ENCODE measurements at regions of chr17 and their contacts with region 1.

Region 1: DNA sequence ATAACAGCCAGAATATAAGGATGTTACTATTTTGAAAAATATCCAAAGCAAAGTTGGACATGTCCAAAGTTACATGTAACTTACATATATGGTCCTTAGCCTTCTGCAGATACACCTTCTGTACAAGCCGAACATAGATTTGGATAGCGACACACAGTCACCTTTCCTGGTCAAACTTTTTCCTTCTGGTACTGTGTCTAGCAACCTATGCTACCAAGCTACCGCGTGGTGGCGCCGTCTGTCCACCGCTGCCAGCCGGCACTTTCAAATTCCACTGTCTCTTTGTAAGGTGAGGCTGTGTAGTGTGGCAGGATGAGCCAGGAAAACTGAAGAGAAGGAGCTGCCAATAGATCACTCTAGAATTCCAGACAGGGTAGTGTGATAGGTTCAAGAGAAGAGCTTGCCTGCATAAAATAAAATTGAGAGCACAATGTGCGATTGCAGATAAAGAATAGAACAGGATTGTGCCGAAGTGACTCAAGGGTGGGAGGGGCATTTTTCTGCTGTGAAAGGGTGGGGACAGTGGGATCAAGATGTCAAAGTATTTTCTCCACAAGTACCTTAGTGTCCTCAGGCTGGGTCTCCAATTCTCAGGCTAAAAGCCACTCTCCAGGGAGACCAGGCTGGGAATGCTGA is 366.9 kb downstream of the SLC39A11 start:
- DNase-seq: no peak
- H3K4me3 ChIP-seq: no peak overlapping the region
- H3K27ac ChIP-seq: no peak overlapping the region
- H3K27me3 ChIP-seq: no peaks in the 10 kb centered on the region
- CTCF ChIP-seq: peak; percentile 98

Region 2: GRCh38 chr17:71371809-71372208 is 1353.7 kb before region 1 on chr17:
- CTCF ChIA-PET with region 1: no interaction called
- POLR2A ChIA-PET with region 1: no interaction called
- DNase-seq: no peak
- H3K4me3 ChIP-seq: no peak overlapping the region
- H3K27ac ChIP-seq: no peak overlapping the region
- H3K27me3 ChIP-seq: no peaks in the 10 kb centered on the region
- CTCF ChIP-seq: no peak

Region 3: DNA sequence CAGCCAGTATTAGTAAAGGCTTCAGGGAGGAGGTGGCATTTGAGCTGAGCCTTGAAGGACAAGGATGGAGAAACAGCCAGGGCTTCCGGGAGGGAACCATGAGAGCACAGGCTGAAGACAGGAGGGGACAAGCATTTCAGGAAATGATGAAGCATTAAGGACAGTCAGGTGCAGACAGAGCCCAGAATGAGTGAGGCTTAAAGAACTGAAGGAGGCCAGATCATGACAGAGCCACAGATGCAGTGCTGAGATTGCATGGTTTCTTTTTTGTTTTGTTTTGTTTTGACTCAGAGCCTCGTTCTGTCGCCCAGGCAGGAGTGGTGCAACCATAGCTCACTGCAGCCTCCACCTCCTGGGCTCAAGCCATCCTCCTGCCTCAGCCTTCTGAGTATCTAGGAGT is 393.2 kb before region 1 on chr17:
- CTCF ChIA-PET with region 1: no interaction called
- POLR2A ChIA-PET with region 1: no interaction called
- DNase-seq: no peak
- H3K4me3 ChIP-seq: no peak overlapping the region
- H3K27ac ChIP-seq: no peak overlapping the region
- H3K27me3 ChIP-seq: no peaks in the 10 kb centered on the region
- CTCF ChIP-seq: no peak

Region 4: DNA sequence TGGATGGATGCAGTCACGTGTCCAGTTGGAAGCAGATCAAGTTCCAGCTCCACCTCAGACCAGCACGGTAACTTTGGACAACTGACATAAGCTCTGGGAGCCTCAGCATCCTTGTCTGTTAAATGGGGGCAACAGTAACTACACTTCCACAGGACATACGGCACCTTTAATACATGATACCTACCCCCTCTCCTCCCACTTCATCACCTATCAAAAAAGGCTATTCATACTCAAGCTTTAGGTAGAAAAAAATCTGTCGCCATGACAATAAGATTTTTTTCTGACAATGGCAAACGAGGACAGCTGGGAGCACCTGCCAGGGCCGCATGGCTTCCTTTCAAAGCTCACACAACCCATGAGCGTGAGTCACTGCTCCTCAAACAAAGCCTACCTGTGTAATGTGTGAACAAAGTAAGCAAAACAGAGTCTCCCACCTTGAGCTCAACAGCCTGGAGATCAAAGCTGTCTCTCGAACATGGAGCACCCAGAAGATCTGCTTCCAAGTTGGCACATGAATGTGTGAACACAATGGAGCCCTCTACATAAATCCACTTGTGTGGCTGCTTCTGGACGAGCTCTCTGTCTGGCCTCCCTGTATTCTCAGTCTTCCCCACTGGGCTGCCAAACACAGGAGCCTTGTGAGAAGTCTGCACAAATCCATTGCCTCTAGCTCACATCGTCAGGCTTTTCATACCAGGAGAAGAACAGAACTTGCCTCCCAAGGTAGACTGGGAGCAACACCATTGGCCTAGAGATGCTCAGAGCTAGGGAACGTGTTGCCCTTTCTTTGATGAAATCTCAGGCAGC is 145.0 kb before region 1 on chr17:
- CTCF ChIA-PET with region 1: interaction called, 22 read pairs
- POLR2A ChIA-PET with region 1: no interaction called
- DNase-seq: no peak
- H3K4me3 ChIP-seq: no peak overlapping the region
- H3K27ac ChIP-seq: no peak overlapping the region
- H3K27me3 ChIP-seq: no peaks in the 10 kb centered on the region
- CTCF ChIP-seq: no peak

Region 5: DNA sequence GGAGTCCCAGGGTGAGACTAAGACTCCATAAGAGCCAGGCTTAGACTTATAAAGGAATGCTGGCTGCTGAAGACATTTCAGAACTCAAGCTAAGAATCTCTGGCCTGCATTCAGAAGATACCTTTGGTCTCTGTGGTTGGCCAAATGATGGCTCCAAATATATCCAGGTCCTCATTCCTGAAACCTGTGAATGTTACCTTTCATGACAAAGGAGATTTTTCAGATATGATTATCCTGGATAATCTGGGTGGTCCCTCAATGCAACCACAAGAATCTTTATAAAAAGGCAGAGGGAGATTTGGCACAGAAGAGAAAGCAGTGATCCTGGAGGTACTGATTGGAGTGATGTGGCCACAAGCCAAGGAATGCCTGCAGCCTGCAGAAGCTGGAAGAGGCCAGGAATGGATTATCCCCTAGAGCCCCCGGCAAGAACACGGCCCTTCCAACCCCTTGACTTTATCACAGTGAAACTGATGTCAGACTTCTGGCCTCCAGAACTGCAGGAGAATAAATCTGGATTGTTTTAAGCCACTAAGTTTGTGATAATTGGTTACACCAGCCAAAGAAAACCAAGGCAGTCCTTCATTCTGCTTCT is 113.7 kb after region 1 on chr17:
- CTCF ChIA-PET with region 1: no interaction called
- POLR2A ChIA-PET with region 1: no interaction called
- DNase-seq: no peak
- H3K4me3 ChIP-seq: no peak overlapping the region
- H3K27ac ChIP-seq: no peak overlapping the region
- H3K27me3 ChIP-seq: no peaks in the 10 kb centered on the region
- CTCF ChIP-seq: no peak

Region 6: DNA sequence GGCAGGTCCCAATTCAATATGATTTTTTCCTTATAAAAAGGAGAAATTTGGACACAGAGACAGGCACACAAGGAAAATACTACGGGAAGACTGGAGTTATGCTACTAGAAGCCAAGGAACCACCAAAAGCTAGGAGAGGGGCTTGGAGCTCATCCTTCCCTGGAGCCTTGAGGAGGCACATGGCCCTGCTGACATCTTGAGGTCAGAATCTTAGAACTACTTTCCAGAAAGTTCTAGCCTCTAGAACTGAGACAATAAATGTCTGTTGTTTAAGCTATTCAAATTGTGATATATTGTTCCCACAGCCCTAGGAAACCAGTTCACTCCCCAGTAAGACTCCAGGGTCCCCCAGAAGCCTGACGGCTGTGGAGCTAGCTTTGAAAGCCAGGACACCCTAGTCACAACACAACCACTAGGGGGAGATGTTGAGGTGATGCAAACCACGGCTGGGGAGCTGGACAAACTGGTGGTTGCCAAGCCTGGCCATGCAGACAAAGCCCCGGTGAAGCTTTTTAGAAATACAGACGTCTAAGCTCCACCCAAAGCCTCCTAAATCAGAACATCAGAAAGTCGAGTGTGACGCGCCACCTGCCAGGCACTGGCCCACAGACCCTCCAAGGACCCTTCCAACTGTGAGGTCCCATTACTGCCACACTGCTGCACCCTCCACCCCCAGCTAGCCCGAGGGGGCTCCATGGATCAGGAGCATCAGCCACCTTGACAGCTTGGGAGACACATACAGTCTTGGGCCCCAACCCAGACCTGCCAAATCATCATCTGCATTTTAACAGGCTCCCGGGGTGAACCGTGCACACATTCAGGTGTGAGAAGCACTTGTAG is 260.6 kb after region 1 on chr17:
- CTCF ChIA-PET with region 1: interaction called, 52 read pairs
- POLR2A ChIA-PET with region 1: no interaction called
- DNase-seq: peak; percentile 56
- H3K4me3 ChIP-seq: no peak overlapping the region
- H3K27ac ChIP-seq: no peak overlapping the region
- H3K27me3 ChIP-seq: no peaks in the 10 kb centered on the region
- CTCF ChIP-seq: peak; percentile 91

Region 7: GRCh38 chr17:73166731-73167581 is 441.4 kb after region 1 on chr17:
- CTCF ChIA-PET with region 1: interaction called, 34 read pairs
- POLR2A ChIA-PET with region 1: no interaction called
- DNase-seq: no peak
- H3K4me3 ChIP-seq: peak overlapping the region; percentile 57
- H3K27ac ChIP-seq: no peak overlapping the region
- H3K27me3 ChIP-seq: peaks cover 60% of the 10 kb centered on the region
- CTCF ChIP-seq: no peak

Region 8: GRCh38 chr17:73215447-73215846 is 489.9 kb after region 1 on chr17:
- CTCF ChIA-PET with region 1: interaction called, 12 read pairs
- POLR2A ChIA-PET with region 1: no interaction called
- DNase-seq: no peak
- H3K4me3 ChIP-seq: no peak overlapping the region
- H3K27ac ChIP-seq: no peak overlapping the region
- H3K27me3 ChIP-seq: no peaks in the 10 kb centered on the region
- CTCF ChIP-seq: peak; percentile 10; the same call in 1 of the 2 replicates

Region 9: GRCh38 chr17:73255671-73256181 is 530.2 kb after region 1 on chr17:
- CTCF ChIA-PET with region 1: interaction called, 49 read pairs
- POLR2A ChIA-PET with region 1: no interaction called
- DNase-seq: no peak
- H3K4me3 ChIP-seq: no peak overlapping the region
- H3K27ac ChIP-seq: no peak overlapping the region
- H3K27me3 ChIP-seq: no peaks in the 10 kb centered on the region
- CTCF ChIP-seq: peak; percentile 97

Measured in AG04450 (cell line).